ENCODE measurements at regions of chr4 and their contacts with region 1.

Region 1: GRCh38 chr4:40924096-40924792 is 174.5 kb downstream of the NSUN7 start:
- DNase-seq: peak; percentile 87
- H3K4me3 Mint-ChIP-seq: no peak overlapping the region
- H3K27ac Mint-ChIP-seq: peak overlapping the region; percentile 64
- H3K4me1 Mint-ChIP-seq: peaks cover 15% of the 10 kb centered on the region
- H3K27me3 Mint-ChIP-seq: peaks cover 14% of the 10 kb centered on the region

Region 2: DNA sequence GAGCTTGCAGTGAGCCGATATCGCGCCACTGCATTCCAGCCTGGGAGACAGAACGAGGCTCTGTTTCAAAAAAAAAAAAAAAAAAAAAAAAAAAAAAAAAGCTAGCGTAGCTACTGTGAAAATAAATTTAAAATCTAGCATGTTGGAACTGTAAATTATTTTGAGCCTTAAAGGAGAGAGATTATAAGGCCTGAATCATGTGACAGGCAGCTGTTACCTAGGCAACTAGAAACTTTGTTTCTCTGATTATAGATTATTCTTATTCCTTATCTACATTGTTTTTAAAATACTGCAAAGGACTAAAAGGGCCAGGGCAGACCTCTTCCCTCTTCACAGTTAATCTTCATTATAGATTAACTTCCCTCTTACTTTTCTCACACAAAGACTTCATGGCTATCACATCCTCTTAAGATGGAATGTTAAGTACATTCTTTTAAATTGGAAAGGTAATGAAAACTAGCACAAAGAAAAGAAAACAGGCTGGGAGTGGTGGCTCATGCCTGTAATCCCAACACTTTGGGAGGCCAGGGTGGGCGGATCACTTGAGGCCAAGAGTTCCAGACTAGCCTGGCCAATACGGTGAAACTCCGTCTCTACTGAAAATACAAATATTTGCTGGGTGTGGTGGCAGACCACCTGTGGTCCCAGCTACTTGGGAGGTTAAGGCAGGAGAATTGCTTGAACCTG is 925.4 kb before region 1 on chr4:
- CTCF ChIA-PET with region 1: no interaction called
- POLR2A ChIA-PET with region 1: no interaction called
- intact Hi-C with region 1: no loop called
- DNase-seq: no peak
- H3K4me3 Mint-ChIP-seq: no peak overlapping the region
- H3K27ac Mint-ChIP-seq: no peak overlapping the region
- H3K4me1 Mint-ChIP-seq: no peaks in the 10 kb centered on the region
- H3K27me3 Mint-ChIP-seq: no peaks in the 10 kb centered on the region

Region 3: GRCh38 chr4:40736910-40737309 is 187.3 kb before region 1 on chr4:
- CTCF ChIA-PET with region 1: interaction called, 10 read pairs
- POLR2A ChIA-PET with region 1: no interaction called
- intact Hi-C with region 1: loop called (anchors 1 kb)
- DNase-seq: no peak
- H3K4me3 Mint-ChIP-seq: no peak overlapping the region
- H3K27ac Mint-ChIP-seq: no peak overlapping the region
- H3K4me1 Mint-ChIP-seq: peaks cover 3% of the 10 kb centered on the region
- H3K27me3 Mint-ChIP-seq: peaks cover 5% of the 10 kb centered on the region

Region 4: GRCh38 chr4:40782876-40783275 is 141.4 kb before region 1 on chr4:
- CTCF ChIA-PET with region 1: no interaction called
- POLR2A ChIA-PET with region 1: no interaction called
- intact Hi-C with region 1: no loop called
- DNase-seq: no peak
- H3K4me3 Mint-ChIP-seq: no peak overlapping the region
- H3K27ac Mint-ChIP-seq: no peak overlapping the region
- H3K4me1 Mint-ChIP-seq: no peaks in the 10 kb centered on the region
- H3K27me3 Mint-ChIP-seq: peaks cover 8% of the 10 kb centered on the region

Region 5: DNA sequence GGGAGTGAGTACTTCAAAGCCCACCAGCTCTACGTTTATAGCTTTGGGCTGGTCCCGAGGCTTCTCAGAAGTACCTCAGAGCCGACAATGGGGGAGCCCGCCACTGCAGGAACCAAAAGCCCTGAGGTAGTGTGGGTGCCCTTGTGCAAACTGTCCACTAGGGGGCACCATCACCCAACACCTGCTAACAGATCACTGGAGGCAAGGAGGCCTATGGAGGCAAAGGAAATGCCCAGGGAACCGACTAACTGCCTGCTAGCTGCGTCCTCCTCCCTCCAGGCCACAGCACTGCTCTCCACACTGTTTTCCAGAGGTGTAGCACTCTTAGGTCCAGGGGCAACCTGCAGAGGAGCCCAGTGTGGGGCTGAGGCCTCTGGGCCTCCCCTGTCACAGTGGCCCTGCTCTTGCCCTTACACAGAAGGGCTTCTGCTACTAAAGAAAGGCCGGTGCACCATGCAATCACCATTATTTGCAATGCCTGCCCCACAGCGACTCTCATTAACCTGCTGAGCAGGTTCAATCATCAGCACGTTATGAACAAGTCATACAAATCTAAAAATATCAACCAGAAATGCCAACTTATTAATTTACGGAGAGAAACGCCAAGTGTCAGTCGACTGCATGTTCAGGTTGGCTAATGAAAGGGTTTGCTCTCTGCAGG is 15.4 kb before region 1 on chr4:
- CTCF ChIA-PET with region 1: interaction called, 157 read pairs
- POLR2A ChIA-PET with region 1: interaction called, 4 read pairs
- intact Hi-C with region 1: loop called (anchors 1 kb)
- DNase-seq: peak; percentile 86
- H3K4me3 Mint-ChIP-seq: no peak overlapping the region
- H3K27ac Mint-ChIP-seq: peak overlapping the region; percentile 83
- H3K4me1 Mint-ChIP-seq: peaks cover 23% of the 10 kb centered on the region
- H3K27me3 Mint-ChIP-seq: no peaks in the 10 kb centered on the region

Region 6: DNA sequence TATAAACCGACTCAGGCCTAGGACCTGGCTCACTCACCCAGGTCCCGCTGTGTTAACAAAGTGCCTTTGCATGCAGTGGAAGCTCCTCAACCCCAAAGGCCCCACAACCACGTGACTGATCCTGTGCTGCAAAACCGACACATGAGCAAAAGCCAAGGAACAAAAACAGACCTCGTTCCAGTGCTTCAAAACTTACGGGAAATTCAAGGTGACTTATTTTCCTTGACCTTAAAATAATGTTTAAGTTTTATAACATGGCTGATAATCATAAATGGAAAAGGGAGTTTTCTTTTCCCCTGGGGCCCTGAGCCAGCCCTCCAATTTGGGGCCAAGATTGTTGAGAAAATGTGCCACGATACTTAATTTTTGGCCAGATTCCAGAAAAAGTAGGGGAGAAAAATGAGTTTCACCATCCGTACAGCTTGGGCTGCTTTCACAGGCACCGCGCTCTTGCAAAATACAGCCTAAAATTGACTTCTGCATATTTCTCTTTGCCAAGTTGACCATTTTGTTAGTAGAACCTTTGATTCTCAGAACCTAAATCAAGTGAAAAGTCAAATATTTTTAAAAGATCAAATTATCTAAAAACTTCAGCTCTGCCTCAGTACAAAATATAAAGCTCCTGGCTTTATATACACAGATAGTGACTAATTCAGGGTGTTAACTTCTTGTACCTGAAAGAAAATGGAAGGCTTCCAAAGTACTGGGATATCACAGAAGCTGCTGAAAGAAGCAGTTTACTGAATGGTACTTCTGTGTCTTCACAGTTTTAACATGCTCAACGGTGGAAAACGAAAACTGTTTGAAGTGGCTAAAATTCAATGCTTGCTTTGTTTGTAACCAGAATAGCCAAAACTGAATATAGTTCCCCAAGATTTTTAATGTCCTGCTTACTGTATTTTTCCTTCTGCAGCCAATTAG is 196.3 kb after region 1 on chr4:
- CTCF ChIA-PET with region 1: no interaction called
- POLR2A ChIA-PET with region 1: no interaction called
- intact Hi-C with region 1: no loop called
- DNase-seq: no peak
- H3K4me3 Mint-ChIP-seq: no peak overlapping the region
- H3K27ac Mint-ChIP-seq: no peak overlapping the region
- H3K4me1 Mint-ChIP-seq: no peaks in the 10 kb centered on the region
- H3K27me3 Mint-ChIP-seq: no peaks in the 10 kb centered on the region

Region 7: GRCh38 chr4:41214136-41214824 is 290.0 kb after region 1 on chr4 and contains the start of gene APBB2:
- CTCF ChIA-PET with region 1: interaction called, 11 read pairs
- POLR2A ChIA-PET with region 1: no interaction called
- intact Hi-C with region 1: loop called (anchors 1 kb)
- DNase-seq: peak; percentile 70
- H3K4me3 Mint-ChIP-seq: peak within 1 kb of the TSS; percentile 76
- H3K27ac Mint-ChIP-seq: no peak within 1 kb of the TSS
- H3K4me1 Mint-ChIP-seq: peaks cover 28% of the 10 kb centered on the region
- H3K27me3 Mint-ChIP-seq: peaks cover 50% of the 10 kb centered on the region
- total RNA-seq, gene APBB2: 1.5 to 1.7 TPM

Region 8: DNA sequence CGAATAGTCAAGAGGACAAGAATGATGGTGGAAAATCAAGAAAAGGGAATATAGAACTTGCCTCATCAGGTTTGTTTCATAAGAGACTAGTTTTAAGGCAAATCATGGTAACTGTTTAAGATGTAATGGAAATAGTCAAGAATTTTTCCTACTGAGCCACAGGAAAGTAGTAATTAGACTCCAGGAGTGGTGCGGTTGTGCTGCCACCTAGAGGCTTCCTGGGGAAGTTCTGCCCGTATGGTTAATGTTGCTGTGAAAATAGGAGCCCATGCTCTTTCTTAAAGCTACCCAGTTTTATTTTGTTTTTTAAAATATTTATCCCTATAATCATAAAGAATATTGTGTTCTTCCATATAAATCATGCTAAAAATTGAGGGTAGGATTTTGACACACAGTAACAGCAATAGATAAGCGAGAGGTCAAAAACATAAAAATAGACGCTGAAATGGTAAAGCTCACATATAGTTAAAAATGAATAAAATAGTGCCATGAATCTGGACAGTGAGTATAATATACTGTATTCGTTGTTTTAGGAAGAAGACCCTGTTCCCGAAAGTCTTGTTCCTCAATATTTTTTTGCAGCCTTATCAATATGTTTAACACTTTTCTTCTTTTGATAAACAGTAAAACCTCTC is 737.3 kb after region 1 on chr4:
- CTCF ChIA-PET with region 1: no interaction called
- POLR2A ChIA-PET with region 1: no interaction called
- intact Hi-C with region 1: loop called (anchors 2 kb)
- DNase-seq: peak; percentile 57
- H3K4me3 Mint-ChIP-seq: no peak overlapping the region
- H3K27ac Mint-ChIP-seq: no peak overlapping the region
- H3K4me1 Mint-ChIP-seq: no peaks in the 10 kb centered on the region
- H3K27me3 Mint-ChIP-seq: peaks cover 10% of the 10 kb centered on the region

Measured in activated CD4-positive, alpha-beta memory T cell treated with anti-CD3 and anti-CD28 coated beads for 36 hours (primary cell).